ENCODE measurements at regions of chr6 and their contacts with region 1.

Region 1: GRCh38 chr6:166106076-166106686 is 61.5 kb downstream of the TBXT start:
- DNase-seq: peak; percentile 56 to 91
- H3K4me3 ChIP-seq: no peak overlapping the region
- CTCF ChIP-seq: peak in 1 of 3 donors; percentile 31
- POLR2A ChIP-seq: no peak

Region 2: DNA sequence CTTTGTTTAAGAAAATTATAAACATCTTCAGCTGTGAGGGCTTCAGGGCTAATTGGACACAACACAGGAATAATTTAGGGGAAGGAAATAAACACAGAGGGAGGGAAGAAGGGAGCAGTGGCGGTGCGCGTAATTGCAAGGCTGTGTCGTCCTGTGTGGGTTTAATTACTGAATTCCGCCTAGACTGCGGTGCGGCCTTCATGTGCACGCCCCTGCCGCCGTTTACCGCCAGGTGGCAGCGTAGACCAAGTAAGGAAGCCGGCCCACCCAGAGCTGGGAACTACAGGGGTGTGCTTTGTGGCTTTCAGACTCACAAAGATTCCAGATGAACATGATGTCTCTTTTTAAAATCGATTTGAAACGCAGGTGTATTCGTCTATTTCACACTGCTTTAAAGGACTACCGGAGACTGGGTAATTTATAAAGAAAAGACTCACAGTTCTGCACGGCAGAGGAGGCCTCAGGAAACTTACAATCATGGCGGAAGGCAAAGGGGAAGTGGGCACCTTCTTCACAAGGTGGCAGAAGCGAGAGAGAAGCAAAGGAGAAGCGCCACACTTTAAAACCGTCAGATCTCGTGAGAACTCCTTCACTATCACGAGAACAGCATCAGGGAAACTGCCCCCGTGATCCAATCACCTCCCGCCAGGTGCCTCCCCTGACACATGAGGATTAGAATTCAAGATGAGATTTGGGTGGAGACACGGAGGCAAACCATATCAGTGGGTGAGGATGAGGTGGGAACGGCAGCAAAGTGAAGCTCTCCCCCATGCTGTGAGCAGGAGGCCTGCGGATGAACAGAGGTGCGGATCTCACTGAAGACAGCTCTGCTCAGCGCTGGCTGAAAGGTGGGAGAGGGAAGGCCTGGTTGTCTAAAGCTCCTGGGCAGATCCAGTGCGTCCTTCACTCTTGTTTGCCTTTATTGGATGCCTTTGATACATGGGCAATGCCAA is 221.1 kb before region 1 on chr6:
- intact Hi-C with region 1: loop called (anchors 10 kb)
- DNase-seq: peak; percentile 54 to 92
- H3K4me3 ChIP-seq: no peak overlapping the region
- CTCF ChIP-seq: peak in 1 of 3 donors; percentile 14
- POLR2A ChIP-seq: no peak

Region 3: DNA sequence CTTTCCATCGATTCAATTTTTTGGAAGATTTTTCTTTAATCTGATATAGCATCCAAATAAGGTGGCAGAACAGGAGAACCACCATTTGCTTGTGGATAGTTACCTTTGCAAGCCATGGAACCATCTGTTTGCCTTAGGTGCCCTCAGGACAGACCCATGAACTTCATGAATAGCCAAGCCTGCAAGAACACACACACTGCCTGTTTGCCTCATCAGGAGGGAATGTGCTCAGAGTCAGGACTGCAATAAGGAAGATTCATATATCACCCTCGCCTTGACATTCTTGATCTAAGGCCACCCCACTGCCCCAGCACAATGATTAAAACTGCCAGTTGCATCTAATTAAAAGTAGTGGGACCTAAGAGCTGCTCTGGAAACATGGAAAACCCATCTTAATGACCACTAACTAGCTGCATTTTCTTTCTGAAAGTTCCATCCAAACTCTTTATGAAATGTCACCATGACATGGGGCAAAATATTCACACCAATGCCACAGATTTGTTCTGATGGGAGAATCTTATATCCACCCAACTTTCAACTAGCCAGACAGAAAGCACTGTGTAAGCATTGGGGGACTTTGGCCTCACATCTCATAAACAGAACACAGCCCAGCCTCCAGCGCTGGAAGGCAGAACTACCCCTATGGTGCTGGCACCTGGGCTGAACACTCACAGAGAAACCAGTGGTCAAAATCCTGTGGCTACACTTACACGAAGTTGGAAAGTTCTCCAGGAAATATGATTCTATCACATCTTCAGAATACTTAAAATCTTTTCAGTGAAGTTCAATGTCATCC is 13.1 kb after region 1 on chr6:
- intact Hi-C with region 1: no loop called
- DNase-seq: no peak
- H3K4me3 ChIP-seq: no peak overlapping the region
- CTCF ChIP-seq: no peak
- POLR2A ChIP-seq: no peak

Measured in lower leg skin (tissue), 4 donors.